ENCODE measurements at regions of chr4 and their contacts with region 1.

Region 1: DNA sequence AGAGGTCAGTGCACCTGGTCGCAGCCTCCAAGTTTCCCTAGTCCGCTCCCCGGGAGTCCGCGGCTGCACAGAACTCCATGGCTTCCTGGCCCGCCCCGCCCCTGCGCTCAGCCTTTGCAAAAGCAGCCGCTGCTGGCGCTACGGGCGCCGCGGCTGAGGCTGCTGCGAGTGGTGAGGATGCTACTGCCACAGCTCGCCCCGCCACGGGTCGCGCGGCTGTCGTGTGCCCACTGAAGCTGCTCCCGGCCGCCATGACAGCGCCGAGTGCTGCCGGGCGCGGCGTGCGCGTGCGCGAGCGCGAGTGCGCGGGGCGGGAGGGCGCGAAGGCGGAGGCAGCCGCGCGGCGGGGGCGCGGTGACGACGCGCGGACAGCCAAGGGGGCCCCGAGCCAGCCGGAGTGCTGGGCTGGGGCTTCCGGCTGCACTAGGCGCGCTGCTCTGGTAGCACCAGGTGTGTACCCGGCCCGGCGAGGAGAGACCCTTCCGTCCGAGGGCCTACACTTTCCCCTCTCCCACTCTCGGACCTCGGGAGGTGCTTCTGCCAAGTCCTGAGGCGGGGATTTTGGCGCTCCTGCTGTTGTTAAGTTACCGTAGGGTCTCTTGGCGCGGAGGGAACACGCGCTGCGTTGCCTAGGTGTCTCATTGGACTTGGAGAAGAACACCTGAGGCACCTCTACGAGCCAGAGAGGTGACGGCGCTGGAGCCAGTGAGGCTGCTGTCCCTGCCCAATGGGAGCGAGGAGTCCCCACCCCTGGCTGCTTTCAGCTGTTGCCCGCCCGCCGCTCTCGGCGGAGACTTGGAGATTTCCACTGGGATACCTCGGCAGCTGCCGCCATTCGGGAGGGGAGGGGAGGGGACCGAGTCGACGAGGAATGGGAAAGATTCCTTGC is 619 bp upstream of the LRBA start:
- DNase-seq: peak; percentile 64
- ATAC-seq: peak; percentile 86
- H3K4me3 ChIP-seq: peak overlapping the region; percentile 81 to 99 (median 97)
- H3K27ac ChIP-seq: peak overlapping the region; percentile 99
- H3K4me1 ChIP-seq: peaks cover 26% of the 10 kb centered on the region
- H3K27me3 ChIP-seq: peaks cover 0 to 1% of the 10 kb centered on the region in 2 experiments; a peak in 2 of 5 replicates
- CTCF ChIP-seq: 0 out of 2 replicates have a peak, but pooled peaks have one; percentile 3
- EP300 ChIP-seq: no peak
- POLR2A ChIP-seq: peak; percentile 89 to 91
- RAD21 ChIP-seq: 0 out of 2 replicates have a peak, but pooled peaks have one; percentile 10

Region 2: DNA sequence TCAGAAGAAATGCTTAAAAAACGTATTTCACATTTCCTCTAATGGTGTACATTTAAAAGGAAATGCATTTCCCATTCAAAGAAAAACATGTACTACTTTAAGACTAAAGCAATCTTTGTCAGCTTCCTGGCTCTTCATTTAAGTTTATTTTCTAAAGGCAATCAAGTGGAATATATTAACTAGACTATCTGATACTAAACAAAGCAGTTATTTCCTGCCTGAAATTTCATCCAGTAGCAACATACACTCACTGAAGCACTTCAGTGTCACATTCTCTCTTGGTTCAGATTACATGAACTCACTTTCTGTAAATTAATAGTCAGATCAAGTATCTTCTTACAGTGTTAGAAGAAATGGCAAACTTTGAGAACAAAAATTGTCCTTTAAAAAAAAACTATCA is 43.1 kb before region 1 on chr4:
- CTCF ChIA-PET with region 1: no interaction called
- POLR2A ChIA-PET with region 1: no interaction called
- in situ Hi-C with region 1: no loop called
- intact Hi-C with region 1: loop called (anchors 2 kb)
- DNase-seq: no peak
- ATAC-seq: no peak
- H3K4me3 ChIP-seq: no peak overlapping the region
- H3K27ac ChIP-seq: no peak overlapping the region
- H3K4me1 ChIP-seq: peaks cover 62% of the 10 kb centered on the region
- H3K27me3 ChIP-seq: no peaks in the 10 kb centered on the region
- CTCF ChIP-seq: no peak
- EP300 ChIP-seq: no peak
- POLR2A ChIP-seq: no peak
- RAD21 ChIP-seq: no peak

Region 3: DNA sequence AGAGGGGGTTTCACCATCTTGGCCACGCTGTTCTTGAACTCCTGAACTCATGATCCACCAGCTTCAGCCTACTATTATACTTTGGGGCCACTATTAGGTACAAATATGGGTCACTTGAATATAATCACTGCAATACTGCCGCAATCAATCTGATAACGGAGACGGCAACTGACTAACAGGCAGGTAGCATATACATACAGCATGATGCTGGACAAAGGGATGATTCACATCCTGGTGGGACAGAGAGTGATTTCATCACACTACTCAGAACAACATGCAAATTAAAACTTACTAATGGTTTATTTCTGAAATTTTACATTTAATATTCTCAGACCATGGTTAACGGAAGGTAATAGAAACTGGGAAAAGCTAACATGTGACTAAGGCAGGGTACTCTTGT is 11.5 kb before region 1 on chr4:
- CTCF ChIA-PET with region 1: no interaction called
- POLR2A ChIA-PET with region 1: no interaction called
- in situ Hi-C with region 1: no loop called
- intact Hi-C with region 1: loop called (anchors 1 kb)
- DNase-seq: no peak
- ATAC-seq: no peak
- H3K4me3 ChIP-seq: no peak overlapping the region
- H3K27ac ChIP-seq: no peak overlapping the region
- H3K4me1 ChIP-seq: no peaks in the 10 kb centered on the region
- H3K27me3 ChIP-seq: no peaks in the 10 kb centered on the region
- CTCF ChIP-seq: no peak
- EP300 ChIP-seq: no peak
- POLR2A ChIP-seq: no peak
- RAD21 ChIP-seq: no peak

Region 4: DNA sequence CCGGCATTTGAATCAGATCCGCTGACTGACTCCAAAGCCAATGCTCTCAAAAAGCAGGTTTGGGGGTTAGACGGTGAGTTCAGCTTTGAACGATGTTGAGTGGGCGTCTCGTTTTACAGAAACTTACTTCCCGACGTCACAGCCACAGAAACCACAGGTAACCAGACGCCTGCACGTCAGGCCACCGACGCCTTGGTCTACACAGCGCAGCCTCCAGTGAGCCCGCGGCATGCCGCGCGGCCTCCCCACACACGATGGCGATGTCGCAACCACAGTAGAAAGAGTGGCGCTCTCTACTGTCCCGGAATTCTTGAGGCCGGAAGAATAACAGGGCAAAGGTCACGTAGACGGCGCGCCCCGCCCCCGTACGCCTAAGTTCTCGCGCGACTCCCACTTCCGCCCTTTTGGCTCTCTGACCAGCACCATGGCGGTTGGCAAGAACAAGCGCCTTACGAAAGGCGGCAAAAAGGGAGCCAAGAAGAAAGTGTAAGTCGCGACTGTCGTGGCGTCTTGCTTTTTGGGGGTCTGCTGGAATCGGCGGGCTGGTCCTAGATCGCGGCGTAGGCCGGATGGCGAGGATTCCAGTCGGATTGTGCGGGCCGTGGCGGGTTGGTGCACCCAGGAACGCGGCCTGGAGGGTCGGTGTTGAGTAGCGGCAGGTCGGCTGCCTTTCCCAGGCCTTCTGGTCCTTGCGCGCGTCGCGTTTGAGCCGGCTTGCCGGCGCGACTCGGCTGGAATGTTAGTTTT is 83.7 kb after region 1 on chr4 and contains the start of gene RPS3A:
- CTCF ChIA-PET with region 1: no interaction called
- POLR2A ChIA-PET with region 1: interaction called, 3 read pairs
- in situ Hi-C with region 1: loop called (anchors 5 kb)
- intact Hi-C with region 1: loop called (anchors 1 kb)
- DNase-seq: peak; percentile 94
- ATAC-seq: peak; percentile 91
- H3K4me3 ChIP-seq: peak within 1 kb of the TSS; percentile 90 to 96 (median 94)
- H3K27ac ChIP-seq: peak within 1 kb of the TSS; percentile 86
- H3K4me1 ChIP-seq: peaks cover 41% of the 10 kb centered on the region
- H3K27me3 ChIP-seq: no peaks in the 10 kb centered on the region; a peak in 1 of 5 replicates
- CTCF ChIP-seq: peak; percentile 98
- EP300 ChIP-seq: peak; percentile 51 to 91
- POLR2A ChIP-seq: peak; percentile 96 to 99
- RAD21 ChIP-seq: peak; percentile 55
- total RNA-seq, gene RPS3A: 3,626 and 4,934 TPM in 2 replicates